GM10248 (cell line): ENCODE measurements at regions of chr12 and their contacts with region 1.

Region 1: DNA sequence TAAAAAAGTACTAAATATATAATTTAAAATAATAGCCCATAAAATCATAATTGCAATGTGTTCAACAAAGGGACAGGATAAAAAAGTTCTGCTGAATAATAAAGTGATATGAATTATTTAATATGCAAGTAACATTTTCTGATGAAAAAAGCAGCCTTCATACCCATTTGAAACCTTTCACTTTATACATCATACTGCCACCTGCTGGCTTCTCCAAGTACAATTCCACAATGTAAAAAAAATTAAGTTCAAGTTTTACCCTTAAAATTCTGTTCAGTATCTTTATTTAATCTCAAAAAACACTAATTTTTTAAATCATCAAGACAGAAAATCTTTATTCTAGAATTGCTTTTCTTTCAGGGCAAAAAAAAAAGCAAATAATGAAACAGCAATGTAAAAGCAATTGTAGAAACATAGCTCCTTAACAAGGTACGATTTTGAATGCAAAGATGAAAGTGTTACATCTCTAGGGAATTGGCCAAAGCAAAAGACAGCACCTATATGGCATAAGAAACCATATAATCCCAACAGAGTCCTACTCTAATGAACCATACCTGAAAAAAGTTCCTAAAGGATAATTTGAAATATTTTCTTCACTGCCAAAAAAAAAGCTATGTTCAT is 15.0 kb downstream of the MDM1 start:
- DNase-seq: peak; percentile 52
- CTCF ChIP-seq: peak; percentile 55

Region 2: DNA sequence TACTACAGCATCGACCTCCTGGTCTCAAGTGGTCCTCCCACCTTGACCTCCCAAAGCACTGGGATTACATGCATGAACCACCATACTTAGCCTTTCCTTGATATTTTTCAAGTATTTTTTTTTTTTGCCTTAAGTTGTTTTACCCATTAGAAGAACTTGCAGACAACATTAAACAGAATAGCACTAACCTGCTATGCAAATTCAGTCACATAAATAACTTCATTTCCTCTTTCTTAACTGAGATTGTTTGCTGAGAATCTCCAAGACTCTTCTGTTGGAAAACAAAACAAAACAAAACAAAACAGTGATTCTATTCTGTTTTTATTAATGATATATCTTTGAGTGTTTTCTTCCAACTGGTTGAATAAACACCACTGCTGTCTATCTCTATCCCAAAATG is 443.8 kb before region 1 on chr12:
- CTCF ChIA-PET with region 1: no interaction called
- POLR2A ChIA-PET with region 1: no interaction called
- DNase-seq: no peak
- CTCF ChIP-seq: no peak

Region 3: GRCh38 chr12:68040450-68041075 is 276.6 kb before region 1 on chr12:
- CTCF ChIA-PET with region 1: interaction called, 34 read pairs
- POLR2A ChIA-PET with region 1: no interaction called
- DNase-seq: peak; percentile 67
- CTCF ChIP-seq: peak; percentile 88

Region 4: GRCh38 chr12:68231229-68231628 is 85.9 kb before region 1 on chr12:
- CTCF ChIA-PET with region 1: interaction called, 94 read pairs
- POLR2A ChIA-PET with region 1: no interaction called
- DNase-seq: no peak
- CTCF ChIP-seq: no peak

Region 5: DNA sequence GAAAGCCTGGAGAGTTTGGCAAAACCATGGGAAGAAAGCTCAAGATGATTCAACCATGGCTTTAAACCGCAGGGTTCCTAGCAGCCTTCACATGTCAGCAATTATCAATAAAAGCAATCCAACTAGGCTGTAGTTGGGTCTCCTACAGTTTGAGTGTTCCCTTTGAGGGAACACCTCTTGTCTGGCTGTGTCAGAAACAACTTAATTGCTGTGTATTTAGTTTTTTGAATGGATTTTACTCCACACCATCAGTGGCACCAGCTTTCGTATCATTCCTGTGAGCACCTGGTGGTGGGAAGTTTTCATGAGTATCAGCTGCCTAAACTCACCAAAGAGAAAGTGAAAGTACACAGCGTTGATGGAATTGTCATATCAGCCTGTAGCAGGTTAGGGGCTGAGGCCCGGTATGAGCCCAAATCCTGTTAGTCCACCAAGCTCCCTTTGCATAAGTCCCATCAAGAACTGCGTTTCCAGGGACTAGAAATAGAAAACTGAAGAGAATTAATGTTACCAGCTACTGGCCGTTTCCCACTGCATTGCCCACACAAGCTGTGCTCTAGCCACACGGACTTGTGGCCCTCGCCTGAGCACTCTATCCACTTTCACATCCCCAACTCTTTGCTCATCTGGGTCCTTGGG is 80.6 kb before region 1 on chr12:
- CTCF ChIA-PET with region 1: interaction called, 14 read pairs
- POLR2A ChIA-PET with region 1: no interaction called
- DNase-seq: peak; percentile 45
- CTCF ChIP-seq: no peak

Region 6: GRCh38 chr12:68267892-68268396 is 49.2 kb before region 1 on chr12:
- CTCF ChIA-PET with region 1: no interaction called
- POLR2A ChIA-PET with region 1: no interaction called
- DNase-seq: no peak
- CTCF ChIP-seq: no peak

Region 7: DNA sequence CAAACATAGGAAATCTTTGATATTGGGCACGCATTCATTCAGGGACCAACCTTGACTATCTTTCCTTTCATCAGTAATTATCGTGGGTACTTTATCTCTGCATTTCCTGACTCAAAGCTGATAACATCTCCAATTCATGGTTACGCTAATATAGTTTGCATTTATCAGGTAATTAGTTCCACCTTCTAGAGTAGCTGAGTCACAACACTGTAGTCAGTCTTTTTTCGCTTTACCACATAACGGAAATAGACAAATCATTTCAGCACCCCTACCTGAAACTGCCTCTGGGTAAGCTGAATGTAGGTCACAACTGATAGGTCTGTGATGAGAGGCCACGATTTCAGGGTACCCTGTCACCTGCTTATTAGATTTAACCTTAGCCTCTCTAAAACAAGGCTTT is 27.0 kb before region 1 on chr12:
- CTCF ChIA-PET with region 1: interaction called, 15 read pairs
- POLR2A ChIA-PET with region 1: no interaction called
- DNase-seq: peak; percentile 36
- CTCF ChIP-seq: no peak

Region 8: DNA sequence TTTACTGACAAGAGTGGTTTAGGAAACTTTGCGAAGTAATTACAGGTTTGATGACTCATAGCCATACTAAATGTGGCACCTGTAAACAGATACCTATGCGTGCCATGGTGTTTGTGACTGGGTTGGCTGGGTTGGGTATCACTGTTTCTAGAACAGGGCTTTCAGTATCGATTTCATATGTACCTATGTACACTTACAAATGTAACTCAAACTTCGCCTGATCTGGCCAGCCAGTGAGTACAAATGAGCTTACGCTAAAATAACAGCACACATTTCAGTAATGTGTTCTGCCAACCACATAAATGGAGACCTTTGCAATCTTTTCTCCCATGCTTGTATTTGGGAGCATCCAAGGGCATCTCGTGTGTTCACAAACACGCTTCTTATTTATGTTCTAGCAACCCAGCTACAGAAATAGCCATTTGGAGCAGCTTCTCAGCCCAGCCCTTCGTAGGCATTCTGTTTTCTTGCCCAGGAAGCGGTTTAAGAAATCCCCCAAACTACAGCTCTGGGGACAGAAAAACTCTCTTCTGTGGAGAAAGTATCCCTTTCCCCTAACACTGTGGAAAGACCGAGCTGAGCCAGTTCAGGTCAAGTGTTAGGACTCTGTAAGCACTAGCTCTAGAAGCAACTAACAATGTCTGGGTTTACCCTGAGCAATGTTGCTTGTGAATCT is 57.3 kb after region 1 on chr12:
- CTCF ChIA-PET with region 1: no interaction called
- POLR2A ChIA-PET with region 1: no interaction called
- DNase-seq: peak; percentile 67
- CTCF ChIP-seq: no peak